ENCODE measurements at regions of chr10 and their contacts with region 1.

Region 1: GRCh38 chr10:131900350-131901146 is at the start of gene PPP2R2D:
- H3K4me3 Mint-ChIP-seq: peak within 1 kb of the TSS; percentile 78
- H3K27ac Mint-ChIP-seq: peak within 1 kb of the TSS; percentile 79
- H3K4me1 Mint-ChIP-seq: peaks cover 44% of the 10 kb centered on the region
- H3K27me3 Mint-ChIP-seq: peaks cover 20% of the 10 kb centered on the region

Region 2: GRCh38 chr10:131710142-131710861 is 190.2 kb before region 1 on chr10:
- intact Hi-C with region 1: no loop called
- H3K4me3 Mint-ChIP-seq: no peak overlapping the region
- H3K27ac Mint-ChIP-seq: no peak overlapping the region
- H3K4me1 Mint-ChIP-seq: no peaks in the 10 kb centered on the region
- H3K27me3 Mint-ChIP-seq: peaks cover 6% of the 10 kb centered on the region

Region 3: GRCh38 chr10:131810805-131811629 is 89.5 kb before region 1 on chr10:
- intact Hi-C with region 1: no loop called
- H3K4me3 Mint-ChIP-seq: no peak overlapping the region
- H3K27ac Mint-ChIP-seq: no peak overlapping the region
- H3K4me1 Mint-ChIP-seq: no peaks in the 10 kb centered on the region
- H3K27me3 Mint-ChIP-seq: no peaks in the 10 kb centered on the region

Region 4: GRCh38 chr10:131981429-131982184 is 81.1 kb after region 1 on chr10 and contains the start of gene BNIP3:
- intact Hi-C with region 1: loop called (anchors 1 kb)
- H3K4me3 Mint-ChIP-seq: peak within 1 kb of the TSS; percentile 92
- H3K27ac Mint-ChIP-seq: peak within 1 kb of the TSS; percentile 87
- H3K4me1 Mint-ChIP-seq: peaks cover 37% of the 10 kb centered on the region
- H3K27me3 Mint-ChIP-seq: peaks cover 68% of the 10 kb centered on the region

Region 5: DNA sequence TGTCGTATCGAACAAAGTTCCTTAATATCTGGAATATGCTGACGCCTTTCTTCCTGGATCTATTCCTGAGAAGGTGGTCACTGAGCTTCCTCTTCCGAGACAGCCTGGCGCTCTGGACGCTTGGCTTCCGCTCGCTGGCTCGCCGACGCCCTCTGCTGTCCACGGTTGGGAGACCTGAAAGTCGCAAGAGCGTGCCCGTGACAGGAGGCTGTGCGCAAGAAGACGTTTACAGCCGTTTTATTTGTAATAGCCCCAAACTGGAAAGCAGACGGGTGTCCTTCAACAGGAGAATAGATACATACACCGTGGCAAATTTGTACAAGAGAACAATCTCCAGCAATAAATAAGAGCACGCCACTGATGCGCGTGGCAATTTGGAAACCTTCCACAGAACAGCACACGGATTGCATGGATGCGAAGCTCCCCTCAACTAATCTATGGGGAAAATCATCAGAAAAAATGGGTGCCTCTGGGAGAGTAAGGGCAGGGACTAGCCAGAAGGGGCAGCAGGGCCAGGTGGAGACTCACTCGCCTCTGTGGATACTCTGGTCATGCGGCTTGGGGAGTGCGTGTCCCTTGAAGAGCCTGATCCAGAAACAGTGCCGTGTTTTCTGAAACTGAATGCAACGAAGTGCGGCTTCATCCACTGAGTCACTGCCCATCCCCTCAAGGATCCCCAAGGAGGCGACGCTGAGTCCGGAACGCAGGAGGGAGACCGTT is 122.7 kb after region 1 on chr10:
- intact Hi-C with region 1: loop called (anchors 5 kb)
- H3K4me3 Mint-ChIP-seq: no peak overlapping the region
- H3K27ac Mint-ChIP-seq: no peak overlapping the region
- H3K4me1 Mint-ChIP-seq: peaks cover 6% of the 10 kb centered on the region
- H3K27me3 Mint-ChIP-seq: peaks cover 34% of the 10 kb centered on the region